Ascending aorta (tissue), 2 donors: ENCODE measurements at regions of chr7 and their contacts with region 1.

Region 1: DNA sequence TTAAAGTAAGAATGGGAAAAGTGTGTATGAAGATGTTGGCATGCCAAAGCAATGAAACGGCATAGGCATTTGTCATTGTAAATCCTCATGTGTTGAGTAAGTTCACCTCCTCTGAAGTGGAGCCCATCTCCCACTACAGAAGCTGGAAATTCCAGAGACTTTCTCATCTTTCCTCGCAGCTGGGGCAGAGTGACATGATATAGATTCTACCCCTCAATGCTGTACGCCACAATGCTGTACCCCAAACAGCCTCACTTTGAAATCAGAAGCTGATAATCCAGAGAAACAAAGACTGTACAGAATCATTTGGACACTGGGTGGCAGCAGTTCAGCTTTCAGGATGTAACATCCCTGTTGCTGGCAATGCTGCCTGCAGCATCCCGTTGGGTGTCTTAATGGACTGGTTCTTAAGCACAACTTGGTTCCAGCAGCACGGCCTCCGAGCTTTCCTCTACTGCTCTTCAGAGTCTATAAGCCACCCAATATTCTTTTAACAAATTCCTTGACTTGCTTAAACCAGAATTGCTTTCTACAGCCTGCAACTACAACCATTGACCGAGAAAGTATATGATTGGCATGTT is 18.8 kb downstream of the ZC3HAV1L start:
- DNase-seq: peak in 1 of 2 donors; percentile 68
- H3K4me3 ChIP-seq: no peak overlapping the region
- H3K27ac ChIP-seq: no peak overlapping the region
- H3K4me1 ChIP-seq: no peaks in the 10 kb centered on the region
- H3K27me3 ChIP-seq: no peaks in the 10 kb centered on the region
- CTCF ChIP-seq: peak; percentile 27 to 53 (median 33)

Region 2: DNA sequence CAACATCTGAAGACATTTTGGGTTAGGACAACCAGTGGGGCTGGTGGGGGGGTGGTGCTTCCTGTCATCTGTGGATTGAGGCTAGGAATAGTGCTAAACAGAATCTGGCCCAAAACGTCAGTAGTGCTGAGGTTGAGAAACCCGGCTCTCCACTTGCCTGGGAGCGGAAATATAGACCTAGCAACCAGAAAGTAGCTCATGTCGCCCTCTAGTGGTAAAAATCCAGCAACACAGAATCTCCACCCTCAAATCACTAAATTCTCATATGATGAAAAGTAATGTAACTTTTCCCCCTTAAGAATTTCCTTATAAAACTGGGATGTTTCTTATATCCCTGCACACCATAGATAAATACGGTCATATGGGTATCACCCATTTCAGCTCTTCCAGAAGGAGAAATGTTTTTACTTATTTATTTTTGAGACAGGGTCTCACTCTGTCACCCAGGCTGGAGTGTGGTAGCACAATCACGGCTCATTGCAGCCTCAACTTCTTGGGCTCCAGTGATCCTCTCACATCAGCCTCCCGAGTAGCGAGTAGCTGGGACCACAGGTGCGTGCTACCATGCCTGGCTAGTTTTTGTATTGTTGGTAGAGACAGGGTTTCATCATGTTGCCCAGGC is 58.1 kb after region 1 on chr7:
- intact Hi-C with region 1: loop called (anchors 2 kb)
- DNase-seq: peak; percentile 29 to 89
- H3K4me3 ChIP-seq: no peak overlapping the region
- H3K27ac ChIP-seq: peak overlapping the region; percentile 28 to 40
- H3K4me1 ChIP-seq: no peaks in the 10 kb centered on the region
- H3K27me3 ChIP-seq: no peaks in the 10 kb centered on the region
- CTCF ChIP-seq: peak; percentile 77 to 84 (median 84)